Ascending aorta (tissue), 2 donors: ENCODE measurements at regions of chr11 and their contacts with region 1.

Region 1: DNA sequence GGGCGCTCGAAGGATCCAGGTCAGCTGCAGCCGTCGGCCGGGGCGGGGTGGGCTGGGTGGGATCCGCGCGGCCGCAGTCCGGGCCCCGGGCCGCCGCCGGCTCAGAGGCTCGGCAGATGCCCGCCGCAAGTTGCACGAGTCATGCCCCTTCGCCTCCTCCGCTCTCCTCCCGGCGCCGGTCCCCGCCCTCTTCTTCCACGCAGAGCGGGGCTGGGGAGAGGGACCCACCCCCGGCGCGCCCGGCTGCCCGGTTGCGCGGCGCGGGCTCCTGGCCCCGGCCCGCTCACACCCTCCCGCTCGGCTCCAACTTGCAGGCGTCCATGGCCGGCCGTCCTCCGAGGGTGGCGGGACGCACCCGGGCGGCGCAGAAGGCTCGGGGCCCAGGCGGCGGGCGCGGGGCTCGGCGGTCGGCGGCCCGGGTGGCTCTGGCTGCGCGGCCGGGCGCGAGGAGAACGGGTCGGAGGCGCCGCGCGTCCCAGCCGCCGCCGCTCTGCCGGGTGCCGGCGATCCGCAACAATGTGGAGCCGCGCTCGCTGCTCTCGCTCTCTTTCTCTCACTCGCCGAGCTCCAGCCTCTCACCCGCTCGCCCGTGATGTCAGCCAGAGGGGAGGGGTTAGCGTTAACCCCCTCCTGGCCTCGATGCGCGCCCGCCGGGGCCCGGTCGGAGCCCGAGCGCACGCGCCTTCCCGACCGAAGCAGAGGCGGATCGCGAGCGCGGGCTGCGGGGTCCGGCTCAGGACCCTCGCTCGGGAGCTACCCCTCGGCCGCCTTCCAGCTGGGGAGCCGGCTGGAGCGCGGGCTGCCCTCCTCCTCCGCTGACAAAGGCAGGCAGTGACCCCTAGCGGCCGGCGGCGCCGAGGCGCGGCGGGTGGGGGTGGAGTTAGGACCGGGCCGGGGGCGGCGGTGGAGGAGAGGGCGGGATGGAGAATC is at the start of gene NECTIN1:
- DNase-seq: peak; percentile 36 to 93
- H3K4me3 ChIP-seq: peak within 1 kb of the TSS; percentile 59 to 94
- H3K27ac ChIP-seq: peak within 1 kb of the TSS; percentile 83 to 89
- H3K4me1 ChIP-seq: peaks cover 7 to 18% of the 10 kb centered on the region in 2 donors
- H3K27me3 ChIP-seq: no peaks in the 10 kb centered on the region
- CTCF ChIP-seq: peak; percentile 83 to 99 (median 97)
- total RNA-seq, gene NECTIN1: 1.6 TPM

Region 2: DNA sequence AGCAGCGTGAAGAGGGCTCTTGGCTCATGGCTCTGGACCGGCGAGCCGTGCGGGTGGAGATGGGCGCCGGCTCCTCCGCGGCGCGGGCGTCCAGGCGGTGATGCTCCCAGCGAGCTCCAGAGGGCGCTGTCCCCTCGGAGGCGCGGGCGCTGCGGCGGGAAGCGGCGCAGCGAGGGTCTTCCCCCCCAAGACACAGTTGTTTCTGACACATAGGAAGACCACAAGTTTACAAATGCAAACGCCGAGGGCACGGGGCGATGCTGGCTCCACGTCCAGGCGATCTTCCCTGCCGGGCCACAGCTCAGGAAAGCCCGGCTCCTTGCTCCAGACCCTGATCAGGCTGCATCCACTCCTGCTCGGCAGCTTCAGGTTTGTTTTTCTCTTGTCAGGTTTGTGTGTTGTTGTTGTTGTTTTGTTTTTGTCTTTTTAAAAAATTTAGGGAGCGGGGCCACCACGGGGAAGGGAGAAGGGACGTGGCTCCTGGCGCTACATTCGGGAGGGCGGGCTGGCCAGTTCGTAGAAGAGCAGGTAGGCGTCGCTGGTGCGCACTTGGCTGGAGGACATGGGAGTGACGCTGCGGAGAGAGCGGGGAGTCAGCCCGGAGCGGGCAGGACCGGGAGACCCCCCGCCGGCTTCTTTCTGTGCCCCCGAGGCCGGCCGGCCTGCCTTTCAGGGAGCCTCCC is 372.4 kb before region 1 on chr11:
- intact Hi-C with region 1: loop called (anchors 10 kb)
- DNase-seq: peak in 1 of 2 donors; percentile 89
- H3K4me3 ChIP-seq: peak overlapping the region; percentile 42 to 71
- H3K27ac ChIP-seq: no peak overlapping the region
- H3K4me1 ChIP-seq: peaks cover 0 to 6% of the 10 kb centered on the region in 2 donors
- H3K27me3 ChIP-seq: no peaks in the 10 kb centered on the region
- CTCF ChIP-seq: peak; percentile 85 to 87 (median 85)

Region 3: DNA sequence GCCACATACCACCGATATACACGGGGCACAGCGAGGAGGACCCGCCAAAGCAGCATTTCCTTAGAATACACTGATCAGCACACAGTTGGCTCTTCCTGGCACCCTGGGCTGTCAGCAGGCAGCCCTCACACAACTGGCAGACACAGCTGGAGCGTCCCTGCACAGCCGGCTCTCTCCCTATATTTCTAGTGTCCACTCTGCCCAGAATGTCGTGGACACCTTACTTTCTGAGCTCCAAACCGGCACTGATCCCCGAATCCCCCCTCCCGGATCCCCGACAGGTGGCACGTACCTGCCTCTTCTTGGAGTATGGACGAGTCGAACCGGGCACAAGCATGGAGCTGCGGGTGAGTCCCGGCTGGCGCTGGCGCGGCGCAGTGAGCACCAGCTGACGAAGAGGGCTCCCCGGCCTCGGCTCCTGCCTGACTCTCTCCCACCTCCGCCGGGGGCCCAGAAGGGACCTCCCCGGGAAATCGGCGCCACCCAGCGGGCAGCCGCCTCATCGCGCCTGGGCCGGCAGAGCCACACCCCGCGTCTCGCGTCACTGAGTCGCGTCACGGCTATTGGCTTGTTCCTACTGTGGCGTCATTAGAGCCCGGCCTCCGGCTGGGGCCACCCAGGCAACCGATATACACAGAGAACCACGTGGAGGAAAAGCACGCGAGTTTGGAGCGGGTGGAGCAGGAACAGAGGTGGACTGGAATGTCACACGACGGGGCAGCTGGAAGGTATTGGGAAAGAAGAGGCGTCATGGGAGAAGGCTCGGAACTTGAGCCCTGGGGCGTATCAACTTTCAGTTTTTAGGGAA is 347.5 kb before region 1 on chr11 and contains the start of gene USP2:
- intact Hi-C with region 1: loop called (anchors 10 kb)
- DNase-seq: peak; percentile 94 to 99
- H3K4me3 ChIP-seq: peak within 1 kb of the TSS; percentile 59 to 64
- H3K27ac ChIP-seq: peak within 1 kb of the TSS; percentile 31 to 37
- H3K4me1 ChIP-seq: peaks cover 0 to 16% of the 10 kb centered on the region in 2 donors
- H3K27me3 ChIP-seq: no peaks in the 10 kb centered on the region
- CTCF ChIP-seq: peak; percentile 88 to 92 (median 90)
- total RNA-seq, gene USP2: not detected

Region 4: GRCh38 chr11:119481021-119481666 is 247.8 kb before region 1 on chr11:
- intact Hi-C with region 1: loop called (anchors 5 kb)
- DNase-seq: peak; percentile 22 to 89
- H3K4me3 ChIP-seq: no peak overlapping the region
- H3K27ac ChIP-seq: no peak overlapping the region
- H3K4me1 ChIP-seq: no peaks in the 10 kb centered on the region
- H3K27me3 ChIP-seq: no peaks in the 10 kb centered on the region
- CTCF ChIP-seq: peak; percentile 82 to 92 (median 91)

Region 5: DNA sequence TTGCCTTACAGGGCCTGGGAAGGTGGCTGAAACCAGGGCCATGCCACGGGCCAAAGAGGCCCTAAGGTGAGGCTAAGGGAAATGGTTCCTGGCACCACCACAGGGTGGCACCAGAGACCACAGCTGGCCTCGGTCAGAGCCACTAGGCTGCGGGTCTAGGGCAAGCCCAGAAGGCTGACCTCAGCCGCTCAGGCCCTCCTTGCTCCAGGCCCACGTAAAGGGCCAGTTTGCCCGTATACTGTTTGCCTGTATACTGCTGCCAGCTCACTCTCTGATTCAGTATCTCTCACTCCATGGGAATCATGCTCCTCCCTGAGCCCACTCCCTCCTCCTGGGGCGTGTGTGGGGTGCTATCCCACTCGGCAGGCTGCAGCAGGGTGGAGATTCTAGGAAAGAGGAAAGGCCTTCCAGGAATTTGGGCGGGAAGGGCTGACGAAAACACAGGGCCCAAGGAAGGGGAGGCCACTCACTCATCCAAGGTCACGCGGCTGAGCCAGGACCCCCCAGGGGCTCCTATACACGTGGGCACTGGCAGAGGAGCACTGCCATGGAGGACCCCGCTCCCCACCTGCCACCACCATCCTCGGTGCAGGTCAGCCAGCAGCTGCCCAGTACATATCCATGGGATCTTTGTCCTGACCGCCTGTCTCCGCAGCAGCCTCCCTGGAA is 62.3 kb before region 1 on chr11:
- intact Hi-C with region 1: loop called (anchors 2 kb)
- DNase-seq: peak in 1 of 2 donors; percentile 84
- H3K4me3 ChIP-seq: no peak overlapping the region
- H3K27ac ChIP-seq: no peak overlapping the region
- H3K4me1 ChIP-seq: peaks cover 0 to 5% of the 10 kb centered on the region in 2 donors
- H3K27me3 ChIP-seq: no peaks in the 10 kb centered on the region
- CTCF ChIP-seq: peak; percentile 87 to 93 (median 91)

Region 6: DNA sequence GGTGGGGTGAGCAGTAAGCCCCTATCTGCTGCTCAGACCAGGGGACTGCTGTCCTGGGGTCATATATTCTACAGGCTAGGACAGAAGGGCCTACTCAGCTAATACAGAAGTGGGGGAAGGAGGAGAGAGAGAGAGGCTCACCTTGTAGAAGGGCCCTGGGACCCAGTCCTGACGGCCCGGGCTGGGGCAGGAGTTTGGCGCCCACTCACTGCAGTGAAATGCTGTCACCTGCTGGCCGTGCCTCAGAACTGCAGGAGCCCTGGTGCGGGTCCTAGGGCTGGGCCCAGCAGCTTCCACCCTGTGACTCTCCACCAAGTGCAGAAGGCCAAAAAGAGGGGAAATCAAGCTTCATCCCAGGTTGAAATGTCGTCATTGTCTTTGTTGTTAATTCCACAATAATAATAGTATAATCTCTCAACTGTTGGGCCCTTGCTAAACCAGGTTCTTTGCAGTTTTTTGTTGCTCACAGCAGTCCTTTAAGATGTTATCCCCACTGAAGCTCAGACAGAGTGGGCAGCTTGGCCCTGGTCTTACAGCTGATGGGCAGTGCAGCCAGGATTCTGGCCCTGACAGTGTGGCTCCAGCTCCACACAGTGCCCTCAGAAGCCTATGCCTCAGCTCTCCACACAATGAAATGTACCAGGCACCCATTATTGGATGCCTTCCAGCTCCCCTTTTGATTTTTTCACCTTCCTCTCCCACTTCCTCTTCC is 379.4 kb after region 1 on chr11:
- intact Hi-C with region 1: loop called (anchors 5 kb)
- DNase-seq: peak in 1 of 2 donors; percentile 70
- H3K4me3 ChIP-seq: no peak overlapping the region
- H3K27ac ChIP-seq: no peak overlapping the region
- H3K4me1 ChIP-seq: no peaks in the 10 kb centered on the region
- H3K27me3 ChIP-seq: no peaks in the 10 kb centered on the region
- CTCF ChIP-seq: peak; percentile 94 to 100 (median 99)

Region 7: DNA sequence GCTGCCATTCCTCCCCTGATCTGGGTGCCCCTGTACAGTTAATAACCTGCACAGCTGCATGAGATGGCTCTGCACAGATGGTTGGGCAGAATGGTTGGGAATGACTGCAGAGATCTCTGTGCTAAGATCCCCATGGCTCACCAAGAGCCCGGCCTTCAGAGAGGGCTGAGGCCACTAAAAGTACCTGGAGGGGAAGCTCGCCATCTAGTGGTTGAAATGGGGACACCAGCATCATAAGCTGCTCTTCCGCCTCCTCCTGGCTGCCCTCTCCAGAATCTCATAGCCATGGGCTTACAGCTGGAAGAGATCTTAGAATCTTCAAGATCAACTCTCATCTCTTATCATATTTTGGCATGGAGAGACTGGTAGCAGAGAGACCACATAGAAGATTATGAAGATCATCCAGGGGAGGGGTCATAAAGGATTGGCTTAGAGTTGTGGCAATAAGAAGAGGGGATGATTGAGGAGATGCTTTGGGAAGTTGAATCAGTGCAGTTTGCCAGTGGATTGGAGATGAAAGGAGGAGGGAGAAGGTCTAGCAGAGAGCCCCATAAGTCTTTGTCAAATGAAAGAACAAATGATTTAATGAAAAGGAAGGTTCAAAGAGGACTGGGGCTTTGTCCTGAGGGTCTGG is 574.2 kb after region 1 on chr11:
- intact Hi-C with region 1: loop called (anchors 5 kb)
- DNase-seq: peak in 1 of 2 donors; percentile 82
- H3K4me3 ChIP-seq: no peak overlapping the region
- H3K27ac ChIP-seq: no peak overlapping the region
- H3K4me1 ChIP-seq: peaks cover 0 to 4% of the 10 kb centered on the region in 2 donors
- H3K27me3 ChIP-seq: no peaks in the 10 kb centered on the region
- CTCF ChIP-seq: peak; percentile 57 to 86 (median 81)